Activated CD4-positive, alpha-beta T cell treated with anti-CD3 and anti-CD28 coated beads, Interleukin-2, amount 10 ng/mL, durations not matched to agents 24 days and 14 days (primary cell): ENCODE measurements at regions of chr3 and their contacts with region 1.

Region 1: GRCh38 chr3:36911990-36912804 is 32.7 kb downstream of the TRANK1 start:
- DNase-seq: peak; percentile 85
- H3K4me3 Mint-ChIP-seq: peak overlapping the region; percentile 66
- H3K27ac Mint-ChIP-seq: peak overlapping the region; percentile 71
- H3K4me1 Mint-ChIP-seq: peaks cover 38% of the 10 kb centered on the region
- H3K27me3 Mint-ChIP-seq: no peaks in the 10 kb centered on the region

Region 2: GRCh38 chr3:36677331-36678007 is 234.7 kb before region 1 on chr3:
- intact Hi-C with region 1: no loop called
- DNase-seq: no peak
- H3K4me3 Mint-ChIP-seq: no peak overlapping the region
- H3K27ac Mint-ChIP-seq: no peak overlapping the region
- H3K4me1 Mint-ChIP-seq: no peaks in the 10 kb centered on the region
- H3K27me3 Mint-ChIP-seq: no peaks in the 10 kb centered on the region

Region 3: DNA sequence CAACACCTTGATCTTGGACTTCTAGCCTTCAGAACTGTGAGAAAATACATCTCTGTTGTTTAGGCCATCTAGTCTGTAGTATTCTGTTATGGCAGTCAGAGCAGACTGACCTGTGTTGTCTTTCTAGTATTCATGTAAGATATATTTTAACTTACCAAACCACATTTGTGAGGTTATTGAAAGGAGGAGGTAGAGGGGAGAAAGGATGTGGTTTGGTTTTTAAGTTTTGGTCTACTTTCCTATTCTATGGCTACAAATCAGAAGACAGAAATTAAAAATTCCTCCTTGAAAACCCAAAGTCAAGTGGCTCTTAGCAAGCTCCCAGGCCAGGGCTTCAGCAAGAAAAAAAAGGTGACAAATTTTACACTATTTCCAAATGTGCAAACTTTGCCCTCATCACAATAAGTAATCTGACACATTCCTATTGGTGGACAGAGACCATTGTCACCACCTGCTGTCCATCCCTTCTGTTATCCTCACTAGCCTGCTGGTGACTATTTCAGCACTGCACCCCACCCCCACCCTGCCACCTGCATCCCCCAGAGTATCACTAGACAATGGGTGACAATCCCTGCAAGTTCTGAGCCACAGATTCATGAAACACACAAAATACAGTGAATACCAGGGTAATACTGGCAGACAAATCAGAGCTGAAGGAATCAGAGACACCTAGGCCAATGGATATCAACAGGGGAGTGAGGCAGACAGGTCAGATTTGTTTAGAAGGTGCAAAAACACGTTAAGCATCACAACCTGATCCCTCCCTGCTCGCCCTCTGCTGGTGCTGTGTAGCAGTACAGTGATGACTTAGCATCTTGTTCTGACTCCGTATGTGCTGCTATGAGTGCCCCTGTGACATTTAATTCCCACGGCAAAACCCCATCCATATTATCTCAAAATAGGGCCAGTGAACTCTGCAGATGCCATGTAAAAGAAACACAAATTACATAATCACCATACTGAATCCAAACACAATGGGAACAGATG is 68.8 kb before region 1 on chr3:
- intact Hi-C with region 1: no loop called
- DNase-seq: peak; percentile 84
- H3K4me3 Mint-ChIP-seq: peak overlapping the region; percentile 36
- H3K27ac Mint-ChIP-seq: no peak overlapping the region
- H3K4me1 Mint-ChIP-seq: peaks cover 22% of the 10 kb centered on the region
- H3K27me3 Mint-ChIP-seq: no peaks in the 10 kb centered on the region

Region 4: GRCh38 chr3:36944012-36944640 is 31.9 kb after region 1 on chr3:
- intact Hi-C with region 1: loop called (anchors 2 kb)
- DNase-seq: peak; percentile 75
- H3K4me3 Mint-ChIP-seq: peak overlapping the region; percentile 76
- H3K27ac Mint-ChIP-seq: no peak overlapping the region
- H3K4me1 Mint-ChIP-seq: peaks cover 12% of the 10 kb centered on the region
- H3K27me3 Mint-ChIP-seq: peaks cover 14% of the 10 kb centered on the region

Region 5: DNA sequence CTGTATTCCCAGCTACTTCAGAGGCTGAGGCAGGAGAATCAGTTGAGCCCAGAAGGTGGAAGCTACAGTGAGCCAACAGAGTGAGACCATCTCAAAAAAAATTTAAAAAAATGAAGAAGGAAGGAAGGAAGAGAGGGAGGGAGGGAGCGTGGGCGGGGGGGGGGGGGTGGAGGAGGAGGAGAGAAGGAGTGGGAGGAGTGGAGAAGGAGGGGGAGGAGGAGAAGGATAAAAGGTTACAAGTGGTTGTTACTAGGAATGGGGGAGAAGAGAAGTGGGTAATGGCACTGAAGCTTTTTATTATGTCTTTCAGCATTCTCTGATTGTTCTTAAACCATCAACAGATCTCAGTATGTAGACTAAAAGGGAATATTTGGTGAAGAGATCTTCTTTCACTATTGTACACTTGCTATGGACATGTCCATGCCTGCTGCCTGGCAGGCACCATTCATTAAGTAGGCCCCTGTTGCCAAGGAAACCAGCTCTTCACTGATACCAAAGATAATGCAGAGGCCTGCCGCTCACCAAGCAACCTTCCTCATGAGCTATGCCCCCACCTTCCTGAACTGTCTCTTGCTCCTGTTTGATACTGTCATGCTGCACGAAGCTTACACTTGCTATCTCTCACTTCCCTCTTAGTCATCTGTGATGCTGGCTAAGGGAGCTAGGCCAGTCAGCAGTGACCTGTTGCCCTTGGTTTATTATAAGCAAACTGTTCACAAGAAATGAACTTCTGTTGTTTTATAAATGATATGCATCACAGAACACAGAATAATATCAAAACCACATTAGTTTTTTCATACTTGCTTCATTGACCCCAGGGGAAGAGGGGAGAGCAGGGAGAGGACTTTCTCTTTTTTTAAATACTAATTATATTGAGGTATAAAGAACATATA is 57.6 kb after region 1 on chr3:
- intact Hi-C with region 1: no loop called
- DNase-seq: peak; percentile 81
- H3K4me3 Mint-ChIP-seq: peak overlapping the region; percentile 21
- H3K27ac Mint-ChIP-seq: peak overlapping the region; percentile 71
- H3K4me1 Mint-ChIP-seq: peaks cover 23% of the 10 kb centered on the region
- H3K27me3 Mint-ChIP-seq: no peaks in the 10 kb centered on the region